Brain microvascular endothelial cell (primary cell): ENCODE measurements at regions of chr1 and their contacts with region 1.

Region 1: DNA sequence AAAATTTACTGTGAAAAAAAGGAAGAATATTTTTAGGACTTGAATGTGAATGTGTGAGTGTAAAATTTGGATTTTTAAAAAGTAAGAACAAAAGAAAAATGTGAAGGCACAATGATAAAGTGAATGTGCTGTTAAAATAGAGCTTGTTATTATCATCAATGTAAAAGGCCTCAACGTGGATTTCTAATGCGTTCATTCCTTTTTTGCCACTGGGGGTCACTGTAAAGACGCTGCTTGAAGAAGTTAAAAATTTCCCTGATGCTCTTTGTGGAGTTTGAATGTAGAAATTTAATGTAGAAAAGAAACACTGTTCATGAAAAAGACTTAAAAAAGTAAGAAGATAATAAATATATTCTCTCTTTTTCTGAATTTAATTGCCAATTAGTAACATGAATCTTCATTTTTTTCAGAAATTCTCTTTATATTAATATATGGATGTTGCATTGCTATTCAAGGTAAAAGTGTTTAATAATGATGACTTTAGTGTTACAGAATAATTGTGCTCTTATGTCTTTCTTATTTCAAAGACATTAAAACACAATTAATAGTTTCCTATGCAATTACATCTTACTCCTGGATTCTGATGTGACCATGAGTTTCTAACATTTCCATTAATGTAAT is 161.5 kb downstream of the DNM3 start:
- DNase-seq: peak; percentile 61
- H3K4me3 ChIP-seq: no peak overlapping the region
- H3K27ac ChIP-seq: no peak overlapping the region
- H3K27me3 ChIP-seq: no peaks in the 10 kb centered on the region
- CTCF ChIP-seq: peak; percentile 74

Region 2: DNA sequence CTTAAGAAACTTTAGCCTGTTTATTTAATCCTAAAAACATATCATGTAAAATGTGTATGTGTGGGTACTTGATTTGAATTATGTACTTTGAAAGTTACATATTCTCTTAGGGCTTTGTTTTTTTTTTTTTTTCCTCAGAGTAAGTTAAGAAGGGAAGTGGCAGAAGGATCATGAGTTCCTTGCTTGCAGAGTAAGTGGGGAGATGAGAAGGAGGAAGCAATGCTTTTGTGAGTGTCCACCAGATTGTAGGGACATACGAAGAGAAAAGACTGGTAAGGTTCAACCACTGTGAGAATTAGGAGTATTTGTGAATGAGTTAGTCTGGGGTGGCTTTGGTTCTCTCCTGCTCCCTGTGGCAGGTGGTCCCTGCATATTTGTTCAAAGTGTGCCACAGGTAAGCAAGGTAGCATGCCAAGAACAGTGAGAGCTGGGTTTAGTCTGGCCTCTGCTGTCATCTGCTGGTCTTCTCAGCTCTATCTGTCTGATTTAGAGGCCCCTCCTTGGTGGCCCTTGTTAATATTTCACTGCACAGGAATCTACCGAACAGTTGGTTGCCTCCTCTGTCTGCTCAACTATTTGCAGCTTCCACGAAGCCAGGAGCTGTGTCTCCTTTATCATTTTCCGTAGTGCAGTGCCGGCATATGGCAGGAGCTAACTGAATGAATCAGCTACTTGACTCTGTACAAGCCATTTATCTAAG is 152.0 kb before region 1 on chr1:
- in situ Hi-C with region 1: no loop called
- DNase-seq: no peak
- H3K4me3 ChIP-seq: no peak overlapping the region
- H3K27ac ChIP-seq: no peak overlapping the region
- H3K27me3 ChIP-seq: no peaks in the 10 kb centered on the region
- CTCF ChIP-seq: no peak

Region 3: GRCh38 chr1:172401892-172402291 is 399.1 kb after region 1 on chr1:
- in situ Hi-C with region 1: loop called (anchors 25 kb)
- DNase-seq: no peak
- H3K4me3 ChIP-seq: no peak overlapping the region
- H3K27ac ChIP-seq: no peak overlapping the region
- H3K27me3 ChIP-seq: no peaks in the 10 kb centered on the region
- CTCF ChIP-seq: peak; percentile 42